Activated CD4-positive, alpha-beta T cell treated with anti-CD3 and anti-CD28 coated beads for 36 hours (primary cell): ENCODE measurements at regions of chr16 and their contacts with region 1.

Region 1: DNA sequence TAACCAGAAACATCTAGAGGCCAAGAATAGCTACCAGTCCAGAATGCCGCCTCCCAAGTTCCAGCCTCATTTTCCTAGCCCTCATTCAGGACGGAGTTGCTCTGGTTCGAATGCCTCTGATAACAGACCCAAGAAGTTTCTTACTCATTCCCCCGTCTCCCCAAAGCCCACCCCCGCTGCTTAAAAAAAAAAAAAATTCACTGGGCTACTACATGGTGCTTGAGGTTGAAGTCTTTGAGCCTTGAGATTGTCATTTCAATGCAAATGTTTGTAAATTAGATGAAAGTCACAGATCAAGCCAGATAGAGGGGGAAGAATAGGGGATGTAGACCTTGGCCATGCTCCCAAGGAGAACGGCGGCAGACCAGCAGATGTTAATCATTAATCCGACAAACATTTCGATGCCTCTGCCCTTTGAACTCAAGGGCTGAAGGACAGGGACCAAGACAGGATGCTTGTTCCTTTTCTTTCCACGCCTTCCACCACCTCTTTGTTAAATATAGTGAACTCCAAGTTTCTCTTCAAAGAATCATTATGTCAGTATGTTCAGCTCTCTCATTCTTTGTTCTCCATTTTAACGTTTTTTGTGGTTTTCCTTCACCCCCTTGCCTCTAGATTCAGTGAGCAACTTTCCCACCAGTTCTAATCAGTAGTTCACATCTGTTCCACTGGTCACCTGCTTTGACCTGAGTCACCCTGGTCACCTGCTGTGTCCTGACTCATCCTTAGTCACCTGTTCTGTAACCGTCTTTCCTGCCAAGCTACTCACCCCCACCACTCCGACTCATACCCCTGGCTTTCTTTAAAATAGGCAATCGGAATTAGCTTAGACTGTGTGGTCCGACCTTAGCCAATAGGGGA is 190.3 kb downstream of the CPPED1 start:
- DNase-seq: peak; percentile 83
- ATAC-seq: peak; percentile 86
- H3K4me3 Mint-ChIP-seq: peak overlapping the region; percentile 49
- H3K27ac Mint-ChIP-seq: peak overlapping the region; percentile 89
- H3K4me1 Mint-ChIP-seq: peaks cover 50% of the 10 kb centered on the region
- H3K27me3 Mint-ChIP-seq: no peaks in the 10 kb centered on the region

Region 2: DNA sequence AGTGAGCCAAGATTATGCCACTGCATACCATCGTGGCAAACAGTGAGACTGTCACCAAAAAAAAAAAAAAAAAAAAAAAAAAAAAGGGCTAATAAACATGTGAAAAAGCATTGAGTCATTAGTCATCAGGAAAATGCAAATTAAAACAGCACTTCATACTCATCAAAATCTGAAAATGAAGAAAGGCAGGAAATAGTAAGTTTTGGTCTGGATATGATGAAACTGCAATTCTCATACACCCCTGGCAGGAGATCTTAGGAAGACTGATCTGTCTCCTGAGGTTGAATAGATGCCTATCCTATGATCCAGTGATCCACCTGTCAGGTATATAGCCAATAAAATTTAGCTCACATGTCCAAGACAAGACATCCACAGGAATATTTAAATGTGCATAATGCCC is 22.4 kb before region 1 on chr16:
- CTCF ChIA-PET with region 1: interaction called, 4 read pairs
- POLR2A ChIA-PET with region 1: no interaction called
- intact Hi-C with region 1: loop called in 1 of 2 experiments (anchors 1 kb)
- DNase-seq: no peak
- ATAC-seq: peak; percentile 88
- H3K4me3 Mint-ChIP-seq: no peak overlapping the region
- H3K27ac Mint-ChIP-seq: peak overlapping the region; percentile 72
- H3K4me1 Mint-ChIP-seq: peaks cover 15% of the 10 kb centered on the region
- H3K27me3 Mint-ChIP-seq: peaks cover 18% of the 10 kb centered on the region

Region 3: GRCh38 chr16:12646490-12647274 is 33.3 kb after region 1 on chr16:
- CTCF ChIA-PET with region 1: no interaction called
- POLR2A ChIA-PET with region 1: interaction called, 9 read pairs
- intact Hi-C with region 1: loop called (anchors 1 to 2 kb)
- DNase-seq: peak; percentile 56
- ATAC-seq: peak; percentile 79
- H3K4me3 Mint-ChIP-seq: peak overlapping the region; percentile 37
- H3K27ac Mint-ChIP-seq: peak overlapping the region; percentile 92
- H3K4me1 Mint-ChIP-seq: peaks cover 22% of the 10 kb centered on the region
- H3K27me3 Mint-ChIP-seq: peaks cover 4% of the 10 kb centered on the region

Region 4: DNA sequence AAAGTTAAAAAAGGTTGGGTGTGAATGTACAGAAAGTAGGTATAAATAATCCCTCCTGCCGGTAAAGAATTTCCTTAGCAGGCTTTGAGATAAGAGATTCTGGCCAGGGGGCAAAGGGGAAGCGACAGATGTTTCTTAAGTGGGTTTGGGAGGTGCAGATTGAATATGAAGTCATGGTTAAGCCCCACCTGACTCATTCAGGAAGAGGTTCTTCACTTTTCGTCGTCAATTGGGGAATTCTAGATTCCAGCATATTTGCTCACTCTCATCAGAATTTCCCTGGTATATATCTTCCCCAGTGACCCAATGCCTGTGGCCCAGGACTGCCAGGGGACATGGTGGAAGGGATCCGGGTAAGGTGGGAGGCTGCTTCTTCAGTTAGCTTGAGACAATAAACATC is 62.5 kb after region 1 on chr16:
- CTCF ChIA-PET with region 1: no interaction called
- POLR2A ChIA-PET with region 1: no interaction called
- intact Hi-C with region 1: no loop called
- DNase-seq: no peak
- ATAC-seq: no peak
- H3K4me3 Mint-ChIP-seq: no peak overlapping the region
- H3K27ac Mint-ChIP-seq: no peak overlapping the region
- H3K4me1 Mint-ChIP-seq: peaks cover 24% of the 10 kb centered on the region
- H3K27me3 Mint-ChIP-seq: no peaks in the 10 kb centered on the region

Region 5: GRCh38 chr16:12803203-12804097 is 190.1 kb after region 1 on chr16 and contains the start of gene CPPED1:
- CTCF ChIA-PET with region 1: no interaction called
- POLR2A ChIA-PET with region 1: no interaction called
- intact Hi-C with region 1: loop called (anchors 1 kb)
- DNase-seq: peak; percentile 95
- ATAC-seq: peak; percentile 93
- H3K4me3 Mint-ChIP-seq: peak within 1 kb of the TSS; percentile 97
- H3K27ac Mint-ChIP-seq: peak within 1 kb of the TSS; percentile 92
- H3K4me1 Mint-ChIP-seq: peaks cover 28% of the 10 kb centered on the region
- H3K27me3 Mint-ChIP-seq: no peaks in the 10 kb centered on the region
- total RNA-seq, gene CPPED1: 8.0 to 9.8 TPM